HepG2 (cell line): ENCODE measurements at regions of chr13 and their contacts with region 1.

Region 1: DNA sequence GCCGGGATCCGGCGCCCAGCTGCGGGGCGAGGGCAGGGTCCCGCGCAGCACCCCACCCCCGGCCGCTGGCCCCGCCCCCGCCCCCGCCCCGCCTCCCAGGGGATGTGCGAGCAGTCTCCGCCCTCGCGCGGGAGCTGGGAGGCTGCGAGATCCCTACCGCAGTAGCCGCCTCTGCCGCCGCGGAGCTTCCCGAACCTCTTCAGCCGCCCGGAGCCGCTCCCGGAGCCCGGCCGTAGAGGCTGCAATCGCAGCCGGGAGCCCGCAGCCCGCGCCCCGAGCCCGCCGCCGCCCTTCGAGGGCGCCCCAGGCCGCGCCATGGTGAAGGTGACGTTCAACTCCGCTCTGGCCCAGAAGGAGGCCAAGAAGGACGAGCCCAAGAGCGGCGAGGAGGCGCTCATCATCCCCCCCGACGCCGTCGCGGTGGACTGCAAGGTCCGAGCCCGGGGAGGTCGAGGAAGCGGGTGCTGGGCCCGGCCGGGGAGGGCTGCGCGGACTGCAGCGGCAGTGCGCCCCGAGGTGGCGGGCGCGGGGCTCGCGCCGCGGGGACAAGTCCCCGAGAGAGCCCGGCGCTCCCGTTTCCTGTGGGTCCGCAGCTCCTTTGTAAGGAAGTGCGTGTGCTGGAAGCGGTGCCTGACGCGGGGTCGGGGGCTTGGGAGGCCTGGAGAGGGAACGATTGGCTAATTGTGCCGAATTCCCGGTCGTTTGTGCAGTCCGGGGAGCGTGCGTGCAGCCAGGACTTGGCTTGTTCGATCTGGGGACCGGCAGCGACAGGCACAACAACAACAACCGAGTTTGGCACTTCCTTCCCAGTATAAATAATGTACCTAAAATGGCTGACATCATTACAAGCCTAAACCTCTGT is at the start of gene ITM2B:
- DNase-seq: peak; percentile 57
- ATAC-seq: peak; percentile 88
- H3K4me3 ChIP-seq: peak within 1 kb of the TSS; percentile 98 to 100 (median 99)
- H3K27ac ChIP-seq: peak within 1 kb of the TSS; percentile 98
- H3K4me1 ChIP-seq: peaks cover 75% of the 10 kb centered on the region
- H3K27me3 ChIP-seq: no peaks in the 10 kb centered on the region; a peak in 1 of 5 replicates
- CTCF ChIP-seq: peak; percentile 65
- EP300 ChIP-seq: no peak
- POLR2A ChIP-seq: peak; percentile 48 to 92
- RAD21 ChIP-seq: peak; percentile 86
- total RNA-seq, gene ITM2B: 80.7 and 158 TPM in 2 replicates

Region 2: DNA sequence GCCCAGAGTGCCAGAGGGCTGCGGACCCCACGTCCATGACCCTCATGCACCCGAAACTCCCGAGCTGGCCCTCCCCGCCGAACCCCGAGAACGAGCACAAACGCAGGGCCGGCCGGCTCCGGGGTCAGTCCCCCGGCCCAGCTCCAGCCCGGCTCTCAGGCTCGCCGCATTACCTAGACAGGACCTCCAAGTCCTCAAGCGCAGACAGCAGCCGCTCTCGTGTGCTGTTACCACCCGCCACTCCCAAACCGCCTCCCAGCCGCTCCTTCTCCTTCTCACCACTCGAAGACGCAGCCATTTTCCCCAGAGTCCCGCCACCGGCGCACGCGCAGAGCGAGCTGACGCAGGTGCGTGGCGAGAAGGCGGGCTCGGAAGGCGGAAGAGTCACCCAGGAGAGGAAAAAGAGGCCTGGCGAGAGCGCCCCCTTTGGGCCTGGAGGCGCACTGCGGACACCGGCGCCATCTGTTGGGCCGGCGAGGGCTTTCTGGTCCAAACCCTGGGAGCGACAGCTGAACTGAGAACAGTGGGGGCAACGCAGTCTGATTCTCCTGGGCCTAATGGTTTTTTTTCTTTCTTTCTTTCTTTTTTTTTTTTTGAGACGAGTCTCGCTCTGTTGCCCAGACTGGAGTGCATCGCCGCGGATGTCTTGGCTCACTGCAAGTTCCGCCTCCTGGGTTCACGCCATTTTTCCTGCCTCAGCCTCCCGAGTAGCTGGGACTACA is 138.3 kb before region 1 on chr13 and contains the start of gene MED4:
- CTCF ChIA-PET with region 1: no interaction called
- POLR2A ChIA-PET with region 1: interaction called, 8 read pairs
- in situ Hi-C with region 1: no loop called
- intact Hi-C with region 1: loop called (anchors 2 kb)
- DNase-seq: peak; percentile 87
- ATAC-seq: peak; percentile 89
- H3K4me3 ChIP-seq: peak within 1 kb of the TSS; percentile 88 to 93 (median 88)
- H3K27ac ChIP-seq: peak within 1 kb of the TSS; percentile 74
- H3K4me1 ChIP-seq: peaks cover 81% of the 10 kb centered on the region
- H3K27me3 ChIP-seq: no peaks in the 10 kb centered on the region; a peak in 1 of 5 replicates
- CTCF ChIP-seq: peak; percentile 96
- EP300 ChIP-seq: peak in 1 of 2 experiments; percentile 23; a peak in 1 of 4 replicates
- POLR2A ChIP-seq: peak; percentile 88 to 89
- RAD21 ChIP-seq: peak; percentile 80
- total RNA-seq, gene MED4: 57.8 and 82.8 TPM in 2 replicates

Region 3: GRCh38 chr13:48201044-48201443 is 32.2 kb before region 1 on chr13:
- CTCF ChIA-PET with region 1: no interaction called
- POLR2A ChIA-PET with region 1: interaction called, 20 read pairs
- in situ Hi-C with region 1: no loop called
- intact Hi-C with region 1: no loop called
- DNase-seq: peak; percentile 85
- ATAC-seq: peak; percentile 97
- H3K4me3 ChIP-seq: peak overlapping the region in 1 of 3 experiments; percentile 31; a peak in 2 of 6 replicates
- H3K27ac ChIP-seq: peak overlapping the region; percentile 60
- H3K4me1 ChIP-seq: peaks cover 38% of the 10 kb centered on the region
- H3K27me3 ChIP-seq: no peaks in the 10 kb centered on the region
- CTCF ChIP-seq: no peak; the same call in 1 of the 2 replicates
- EP300 ChIP-seq: peak in 1 of 2 experiments; percentile 77; a peak in 2 of 4 replicates
- POLR2A ChIP-seq: no peak
- RAD21 ChIP-seq: 0 out of 2 replicates have a peak, but pooled peaks have one; percentile 18

Region 4: DNA sequence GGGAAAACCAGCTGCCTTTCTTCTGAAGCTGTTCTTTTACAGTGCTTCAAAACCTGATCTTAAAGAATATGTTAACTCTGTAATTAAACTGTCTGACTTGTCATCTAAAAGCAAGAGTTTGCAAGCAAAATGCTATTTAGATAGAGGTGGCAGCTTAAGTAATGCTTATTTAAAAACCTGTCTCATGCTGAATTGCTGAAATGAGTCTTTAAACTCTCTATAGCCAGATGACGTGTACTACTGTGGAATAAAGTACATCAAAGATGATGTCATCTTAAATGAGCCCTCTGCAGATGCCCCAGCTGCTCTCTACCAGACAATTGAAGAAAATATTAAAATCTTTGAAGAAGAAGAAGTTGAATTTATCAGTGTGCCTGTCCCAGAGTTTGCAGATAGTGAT is 22.7 kb after region 1 on chr13:
- CTCF ChIA-PET with region 1: no interaction called
- POLR2A ChIA-PET with region 1: interaction called, 16 read pairs
- in situ Hi-C with region 1: no loop called
- intact Hi-C with region 1: no loop called
- DNase-seq: no peak
- ATAC-seq: no peak
- H3K4me3 ChIP-seq: no peak overlapping the region
- H3K27ac ChIP-seq: no peak overlapping the region
- H3K4me1 ChIP-seq: peaks cover 64% of the 10 kb centered on the region
- H3K27me3 ChIP-seq: no peaks in the 10 kb centered on the region
- CTCF ChIP-seq: no peak
- EP300 ChIP-seq: no peak
- POLR2A ChIP-seq: no peak
- RAD21 ChIP-seq: no peak

Region 5: DNA sequence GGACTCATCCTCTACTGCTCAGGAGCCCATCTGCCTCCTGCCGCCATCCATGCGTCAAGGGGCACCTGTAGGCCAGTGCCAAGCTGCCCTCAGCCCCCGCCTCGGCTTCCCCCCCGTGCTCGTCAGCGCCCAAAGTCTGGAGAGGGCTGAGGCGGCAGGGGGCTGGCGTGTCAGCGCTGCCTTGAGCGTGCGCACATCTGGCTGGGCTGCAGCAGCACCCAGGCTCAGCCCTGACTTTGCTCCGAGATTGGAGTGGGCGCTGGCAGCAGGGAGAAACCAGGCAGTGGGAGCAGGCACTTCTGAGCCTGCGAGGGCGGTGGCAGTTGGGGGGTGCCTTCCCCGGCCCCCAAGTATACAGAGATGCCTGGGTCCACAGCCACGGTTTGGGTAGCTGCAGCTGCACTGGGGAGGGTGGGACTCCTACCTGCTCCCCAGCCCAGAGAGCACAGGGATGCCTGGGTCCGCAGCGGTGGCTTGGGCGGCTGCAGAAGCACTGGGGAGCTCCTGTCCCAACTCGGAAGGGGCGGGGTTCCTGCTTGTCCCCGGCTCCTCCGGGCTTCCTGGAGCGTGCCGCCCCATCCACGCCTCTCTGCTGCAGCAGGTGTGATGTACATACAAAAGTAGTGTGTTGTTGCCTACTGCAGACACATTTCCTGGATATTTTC is 224.4 kb after region 1 on chr13:
- CTCF ChIA-PET with region 1: no interaction called
- POLR2A ChIA-PET with region 1: no interaction called
- in situ Hi-C with region 1: no loop called
- intact Hi-C with region 1: no loop called
- DNase-seq: no peak
- ATAC-seq: no peak
- H3K4me3 ChIP-seq: no peak overlapping the region
- H3K27ac ChIP-seq: no peak overlapping the region
- H3K4me1 ChIP-seq: no peaks in the 10 kb centered on the region
- H3K27me3 ChIP-seq: no peaks in the 10 kb centered on the region; a peak in 1 of 5 replicates
- CTCF ChIP-seq: no peak
- EP300 ChIP-seq: no peak
- POLR2A ChIP-seq: no peak
- RAD21 ChIP-seq: no peak

Region 6: GRCh38 chr13:48580185-48580803 is 347.0 kb after region 1 on chr13:
- CTCF ChIA-PET with region 1: no interaction called
- POLR2A ChIA-PET with region 1: no interaction called
- in situ Hi-C with region 1: no loop called
- intact Hi-C with region 1: loop called (anchors 1 kb)
- DNase-seq: peak; percentile 52
- ATAC-seq: no peak; the same call in 2 of the 3 replicates
- H3K4me3 ChIP-seq: no peak overlapping the region
- H3K27ac ChIP-seq: no peak overlapping the region
- H3K4me1 ChIP-seq: peaks cover 83% of the 10 kb centered on the region
- H3K27me3 ChIP-seq: no peaks in the 10 kb centered on the region
- CTCF ChIP-seq: peak; percentile 69
- EP300 ChIP-seq: no peak
- POLR2A ChIP-seq: no peak
- RAD21 ChIP-seq: no peak

Region 7: GRCh38 chr13:48808689-48809088 is 575.4 kb after region 1 on chr13:
- CTCF ChIA-PET with region 1: no interaction called
- POLR2A ChIA-PET with region 1: no interaction called
- in situ Hi-C with region 1: no loop called
- intact Hi-C with region 1: no loop called
- DNase-seq: peak; percentile 35
- ATAC-seq: peak; percentile 93
- H3K4me3 ChIP-seq: no peak overlapping the region
- H3K27ac ChIP-seq: no peak overlapping the region
- H3K4me1 ChIP-seq: no peaks in the 10 kb centered on the region
- H3K27me3 ChIP-seq: no peaks in the 10 kb centered on the region
- CTCF ChIP-seq: no peak
- EP300 ChIP-seq: no peak
- POLR2A ChIP-seq: no peak
- RAD21 ChIP-seq: no peak